ENCODE measurements at regions of chr18 and their contacts with region 1.

Region 1: DNA sequence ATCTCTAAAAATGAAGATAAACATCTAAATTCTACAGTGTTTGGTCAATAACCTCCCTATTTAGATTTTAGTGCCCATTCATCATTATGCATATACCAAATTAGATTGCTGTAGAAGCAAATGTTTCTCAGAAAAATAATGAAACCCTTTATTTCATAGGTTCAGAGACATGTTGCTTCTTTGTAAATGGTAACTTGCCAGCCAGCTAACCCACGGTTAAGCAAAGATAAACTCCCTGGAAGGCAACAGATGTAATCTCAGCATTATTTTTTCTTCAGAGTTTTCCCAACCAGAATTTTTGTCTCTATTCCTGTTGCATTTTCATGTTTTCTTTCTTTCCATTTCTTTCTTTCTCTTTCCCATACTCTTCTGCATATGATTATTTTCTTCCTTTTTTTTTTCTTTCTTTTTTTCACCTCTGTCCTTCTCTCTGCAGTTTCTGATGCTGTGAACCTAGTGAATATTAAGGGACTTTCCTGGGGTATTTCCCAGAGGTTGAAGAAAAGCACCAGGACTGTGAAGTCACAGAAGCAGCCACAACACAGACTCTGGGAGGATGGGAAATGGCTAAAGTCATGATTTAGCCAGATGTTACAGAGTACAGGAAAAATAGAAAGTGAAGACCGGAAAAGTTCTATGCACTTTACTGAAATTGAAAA is 50.0 kb upstream of the DSG1 start:
- DNase-seq: no peak
- ATAC-seq: no peak
- H3K4me3 ChIP-seq: no peak overlapping the region
- H3K27ac ChIP-seq: no peak overlapping the region
- H3K4me1 ChIP-seq: peaks cover 0 to 9% of the 10 kb centered on the region in 2 experiments; a peak in 3 of 4 replicates
- H3K27me3 ChIP-seq: no peaks in the 10 kb centered on the region
- CTCF ChIP-seq: no peak
- POLR2A ChIP-seq: no peak
- RAD21 ChIP-seq: no peak

Region 2: GRCh38 chr18:31156821-31157777 is 110.9 kb before region 1 on chr18:
- CTCF ChIA-PET with region 1: no interaction called
- POLR2A ChIA-PET with region 1: no interaction called
- RAD21 ChIA-PET with region 1: no interaction called
- intact Hi-C with region 1: no loop called
- DNase-seq: no peak
- ATAC-seq: no peak; the same call in 1 of the 2 replicates
- H3K4me3 ChIP-seq: no peak overlapping the region
- H3K27ac ChIP-seq: no peak overlapping the region
- H3K4me1 ChIP-seq: peaks cover 0 to 3% of the 10 kb centered on the region in 2 experiments; a peak in 1 of 4 replicates
- H3K27me3 ChIP-seq: no peaks in the 10 kb centered on the region
- CTCF ChIP-seq: no peak
- POLR2A ChIP-seq: no peak
- RAD21 ChIP-seq: no peak

Region 3: DNA sequence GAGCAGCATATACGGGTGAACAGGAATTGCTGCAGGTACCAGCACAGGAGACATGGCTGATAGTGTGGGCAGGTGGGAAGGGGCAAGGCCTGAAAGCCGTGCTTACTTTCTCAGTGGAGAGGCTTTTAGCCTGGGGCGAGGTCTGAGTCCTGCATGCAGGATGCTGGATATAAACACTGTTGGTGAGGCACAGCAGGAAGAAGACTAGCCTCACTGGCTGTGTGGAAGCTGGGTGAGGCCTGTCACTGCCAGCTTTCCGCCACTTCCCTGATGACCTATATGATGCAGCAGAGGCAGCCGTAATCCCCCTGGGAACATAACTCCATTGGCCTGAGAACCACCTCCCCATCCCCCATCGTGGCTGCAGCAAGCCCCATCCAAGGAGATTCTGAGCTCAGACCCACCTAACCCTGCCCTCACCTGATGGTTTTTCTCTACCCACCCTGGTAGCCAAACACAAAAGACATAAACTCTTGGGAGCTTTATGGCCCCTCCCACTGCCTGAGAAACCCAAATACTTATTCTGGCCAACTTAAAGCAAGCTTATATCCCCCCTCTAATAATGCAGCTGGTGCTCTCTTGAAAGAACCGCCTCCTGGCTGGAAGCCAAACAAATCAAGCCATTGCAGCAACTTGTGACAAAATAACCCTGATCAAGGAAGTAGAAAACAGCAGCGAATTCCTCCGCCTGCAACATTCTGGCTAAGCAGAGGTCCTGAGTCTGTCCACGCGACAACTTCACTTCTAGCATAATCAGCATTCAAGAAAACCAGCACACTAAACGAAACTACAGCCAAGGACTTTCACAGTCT is 50.7 kb before region 1 on chr18:
- CTCF ChIA-PET with region 1: no interaction called
- POLR2A ChIA-PET with region 1: no interaction called
- RAD21 ChIA-PET with region 1: no interaction called
- intact Hi-C with region 1: loop called (anchors 5 kb)
- DNase-seq: no peak
- ATAC-seq: no peak
- H3K4me3 ChIP-seq: no peak overlapping the region
- H3K27ac ChIP-seq: no peak overlapping the region
- H3K4me1 ChIP-seq: no peaks in the 10 kb centered on the region
- H3K27me3 ChIP-seq: no peaks in the 10 kb centered on the region
- CTCF ChIP-seq: no peak
- POLR2A ChIP-seq: no peak
- RAD21 ChIP-seq: no peak

Region 4: GRCh38 chr18:31506024-31506742 is 238.2 kb after region 1 on chr18:
- CTCF ChIA-PET with region 1: no interaction called
- POLR2A ChIA-PET with region 1: no interaction called
- RAD21 ChIA-PET with region 1: no interaction called
- intact Hi-C with region 1: loop called (anchors 5 kb)
- DNase-seq: no peak
- ATAC-seq: no peak
- H3K4me3 ChIP-seq: no peak overlapping the region
- H3K27ac ChIP-seq: no peak overlapping the region; the same call in 1 of the 2 replicates
- H3K4me1 ChIP-seq: peaks cover 26 to 33% of the 10 kb centered on the region in 2 experiments
- H3K27me3 ChIP-seq: no peaks in the 10 kb centered on the region
- CTCF ChIP-seq: peak; percentile 40 to 63 (median 44); a peak in 5 of 6 replicates
- POLR2A ChIP-seq: no peak
- RAD21 ChIP-seq: peak; percentile 72